Activated T-helper 1 cell treated with anti-CD3 and anti-CD28 coated beads, Interleukin-12 subunit alpha, Interleukin-12 subunit beta, Interleukin-2, Interleukin-4 antibody, amounts not matched to agents 30 ng/mL and 10 ng/mL and 1 ng/mL, durations not matched to agents 14 hours and 24 hours and 36 hours (primary cell): ENCODE measurements at regions of chrX and their contacts with region 1.

Region 1: DNA sequence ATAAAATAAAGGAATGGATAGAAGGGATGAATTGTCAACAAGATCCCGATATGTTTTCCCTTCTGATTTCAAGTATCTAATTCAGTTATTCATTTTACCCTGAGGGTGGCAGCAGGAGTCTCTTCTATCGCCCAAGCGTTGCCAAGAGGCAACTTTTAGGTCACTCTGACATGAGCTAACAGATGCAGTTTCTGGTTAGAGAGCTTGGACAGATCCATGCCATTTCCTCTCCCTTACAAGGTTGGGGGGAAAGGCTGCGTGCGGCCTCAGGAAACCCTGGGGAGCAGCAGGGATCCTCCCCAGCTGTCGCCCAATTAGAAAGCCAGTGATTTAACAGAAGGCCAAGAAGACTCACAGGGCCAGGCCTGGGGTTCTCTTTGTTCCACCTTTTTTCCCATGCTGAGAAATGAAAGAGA is 35.3 kb upstream of the WAS start:
- DNase-seq: no peak
- H3K4me3 Mint-ChIP-seq: no peak overlapping the region
- H3K27ac Mint-ChIP-seq: no peak overlapping the region
- H3K4me1 Mint-ChIP-seq: peaks cover 5% of the 10 kb centered on the region
- H3K27me3 Mint-ChIP-seq: no peaks in the 10 kb centered on the region

Region 2: GRCh38 chrX:48636776-48637175 is 11.6 kb before region 1 on chrX:
- intact Hi-C with region 1: no loop called
- DNase-seq: no peak
- H3K4me3 Mint-ChIP-seq: no peak overlapping the region
- H3K27ac Mint-ChIP-seq: no peak overlapping the region
- H3K4me1 Mint-ChIP-seq: peaks cover 6% of the 10 kb centered on the region
- H3K27me3 Mint-ChIP-seq: no peaks in the 10 kb centered on the region

Region 3: GRCh38 chrX:48945516-48946348 is 297.4 kb after region 1 on chrX:
- intact Hi-C with region 1: loop called (anchors 5 kb)
- DNase-seq: no peak
- H3K4me3 Mint-ChIP-seq: peak overlapping the region; percentile 17
- H3K27ac Mint-ChIP-seq: no peak overlapping the region
- H3K4me1 Mint-ChIP-seq: peaks cover 34% of the 10 kb centered on the region
- H3K27me3 Mint-ChIP-seq: no peaks in the 10 kb centered on the region